ENCODE measurements at regions of chr5 and their contacts with region 1.

Region 1: GRCh38 chr5:57650360-57651069 is 167.9 kb upstream of the ACTBL2 start:
- DNase-seq: peak; percentile 93
- ATAC-seq: peak; percentile 99
- H3K4me3 ChIP-seq: peak overlapping the region; percentile 30 to 51 (median 31); a peak in 4 of 6 replicates
- H3K27ac ChIP-seq: peak overlapping the region; percentile 57
- H3K4me1 ChIP-seq: peaks cover 25% of the 10 kb centered on the region
- H3K27me3 ChIP-seq: no peaks in the 10 kb centered on the region
- CTCF ChIP-seq: peak; percentile 94
- EP300 ChIP-seq: peak in 1 of 2 experiments; percentile 52; a peak in 1 of 4 replicates
- POLR2A ChIP-seq: peak in 1 of 2 experiments; percentile 65; a peak in 2 of 4 replicates
- RAD21 ChIP-seq: peak; percentile 89

Region 2: DNA sequence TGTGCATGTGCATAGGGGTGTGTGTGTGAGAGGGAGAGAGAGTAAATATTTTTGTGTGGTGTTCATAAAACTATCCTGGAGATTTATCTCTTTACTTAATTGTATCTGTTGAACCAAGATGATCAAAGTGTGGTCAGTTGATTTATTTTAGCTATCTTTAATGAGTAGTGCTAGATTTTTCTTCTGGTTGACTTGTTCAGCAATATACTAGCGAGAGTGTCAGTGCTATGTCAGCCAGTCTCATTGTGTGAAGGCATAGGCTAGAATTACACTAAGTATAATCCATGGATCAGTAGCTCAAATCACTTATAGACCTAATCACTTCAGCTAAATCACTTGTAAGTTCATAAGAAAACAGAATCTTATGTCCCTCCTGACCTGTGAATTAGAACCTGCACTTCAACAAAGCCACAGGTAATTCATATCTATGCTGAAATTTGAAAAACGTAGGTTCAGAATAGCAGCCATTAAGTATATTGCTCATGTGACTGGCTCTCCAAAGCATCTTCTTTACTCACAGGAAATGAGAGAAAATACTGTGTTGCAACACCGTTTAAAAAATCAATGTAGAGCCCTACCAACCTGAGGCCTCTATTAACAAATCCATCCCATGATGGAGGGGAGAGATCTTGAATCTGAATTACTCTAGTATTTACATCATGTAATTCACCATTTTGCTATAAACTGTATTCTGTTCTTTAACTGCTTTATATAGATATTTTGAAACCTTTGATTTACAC is 35.2 kb after region 1 on chr5:
- CTCF ChIA-PET with region 1: no interaction called
- POLR2A ChIA-PET with region 1: interaction called, 3 read pairs
- in situ Hi-C with region 1: no loop called
- intact Hi-C with region 1: loop called (anchors 1 kb)
- DNase-seq: no peak
- ATAC-seq: peak; percentile 62; the same call in 2 of the 3 replicates
- H3K4me3 ChIP-seq: no peak overlapping the region
- H3K27ac ChIP-seq: no peak overlapping the region
- H3K4me1 ChIP-seq: no peaks in the 10 kb centered on the region
- H3K27me3 ChIP-seq: no peaks in the 10 kb centered on the region
- CTCF ChIP-seq: no peak
- EP300 ChIP-seq: no peak
- POLR2A ChIP-seq: no peak
- RAD21 ChIP-seq: no peak

Region 3: DNA sequence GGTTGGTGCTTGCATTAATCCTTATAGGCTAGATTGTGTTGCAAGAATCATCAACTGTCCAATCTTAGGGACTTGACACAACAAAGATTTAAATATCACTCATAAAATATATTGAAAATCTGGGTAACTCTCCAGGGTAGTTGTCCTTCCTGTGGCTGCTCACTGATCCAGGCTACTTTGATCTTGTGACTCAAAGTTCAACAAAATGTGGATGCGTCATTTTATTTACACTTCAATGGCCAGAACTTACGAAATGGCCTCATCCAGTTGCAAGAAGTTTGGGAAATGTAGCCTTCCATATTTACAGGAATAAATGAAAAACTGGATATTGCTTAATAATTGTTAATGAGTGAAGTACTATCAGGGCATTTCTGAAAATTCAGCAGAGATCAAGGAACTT is 67.6 kb after region 1 on chr5:
- CTCF ChIA-PET with region 1: no interaction called
- POLR2A ChIA-PET with region 1: interaction called, 3 read pairs
- in situ Hi-C with region 1: no loop called
- intact Hi-C with region 1: loop called (anchors 5 kb)
- DNase-seq: peak; percentile 85
- ATAC-seq: peak; percentile 80
- H3K4me3 ChIP-seq: no peak overlapping the region
- H3K27ac ChIP-seq: no peak overlapping the region
- H3K4me1 ChIP-seq: peaks cover 24% of the 10 kb centered on the region
- H3K27me3 ChIP-seq: no peaks in the 10 kb centered on the region
- CTCF ChIP-seq: no peak
- EP300 ChIP-seq: peak; percentile 63 to 87; a peak in 3 of 4 replicates
- POLR2A ChIP-seq: no peak
- RAD21 ChIP-seq: no peak

Region 4: DNA sequence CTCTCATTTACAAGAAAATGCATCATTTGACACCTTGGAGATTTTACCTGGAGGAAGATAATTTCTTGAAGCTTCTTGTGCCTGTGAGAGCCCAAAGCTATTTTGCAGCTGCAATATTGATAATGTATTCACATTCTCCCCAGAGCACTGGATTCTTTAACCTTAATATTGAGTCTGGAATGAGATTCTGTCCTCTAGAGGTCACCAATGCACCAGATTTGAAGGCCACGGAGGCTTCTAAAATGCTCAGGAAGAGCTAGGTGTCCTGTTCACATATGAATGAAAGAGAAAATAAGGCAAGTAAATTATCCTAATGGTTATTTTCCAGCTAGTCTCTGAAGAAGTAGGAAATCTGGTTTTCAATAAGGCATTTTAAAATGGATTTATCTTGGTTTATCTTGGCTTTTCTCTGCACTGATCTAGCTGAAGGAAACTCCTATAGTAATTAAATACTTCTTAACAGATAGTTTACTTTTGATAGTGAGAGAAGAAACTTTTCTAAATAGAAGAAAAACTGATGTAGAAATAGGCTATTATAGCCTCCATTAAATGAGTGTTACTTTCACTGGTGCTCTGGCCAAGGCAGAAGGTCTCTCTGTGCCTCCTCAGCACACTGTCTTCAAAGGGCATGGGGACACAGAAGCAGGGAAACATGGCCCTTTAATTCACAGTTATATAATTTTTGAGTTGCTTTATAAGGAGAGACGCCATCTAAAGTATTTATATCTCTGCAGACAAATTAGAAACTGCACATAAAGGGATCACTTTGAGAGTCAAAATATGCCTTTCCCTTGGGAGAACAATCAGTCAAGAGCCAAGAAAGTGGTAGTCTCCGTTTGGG is 129.1 kb after region 1 on chr5:
- CTCF ChIA-PET with region 1: interaction called, 9 read pairs
- POLR2A ChIA-PET with region 1: interaction called, 7 read pairs
- in situ Hi-C with region 1: no loop called
- intact Hi-C with region 1: loop called (anchors 1 kb)
- DNase-seq: peak; percentile 49
- ATAC-seq: peak; percentile 83
- H3K4me3 ChIP-seq: no peak overlapping the region
- H3K27ac ChIP-seq: no peak overlapping the region
- H3K4me1 ChIP-seq: peaks cover 31% of the 10 kb centered on the region
- H3K27me3 ChIP-seq: no peaks in the 10 kb centered on the region
- CTCF ChIP-seq: peak; percentile 66
- EP300 ChIP-seq: no peak
- POLR2A ChIP-seq: no peak
- RAD21 ChIP-seq: peak; percentile 38; the same call in 1 of the 2 replicates

Measured in HepG2 (cell line).